HCT116 (cell line): ENCODE measurements at regions of chr20 and their contacts with region 1.

Region 1: GRCh38 chr20:1503564-1504227 is 12.5 kb upstream of the SIRPB2 start:
- DNase-seq: peak; percentile 91
- ATAC-seq: peak; percentile 97
- H3K4me3 ChIP-seq: no peak overlapping the region
- H3K27ac ChIP-seq: no peak overlapping the region
- H3K4me1 ChIP-seq: peaks cover 4 to 18% of the 10 kb centered on the region in 2 experiments
- H3K27me3 ChIP-seq: no peaks in the 10 kb centered on the region
- CTCF ChIP-seq: peak; percentile 99 to 100 (median 100)
- POLR2A ChIP-seq: no peak
- RAD21 ChIP-seq: peak; percentile 100

Region 2: GRCh38 chr20:1474825-1475603 is 28.7 kb before region 1 on chr20:
- CTCF ChIA-PET with region 1: interaction called, 36 read pairs
- POLR2A ChIA-PET with region 1: no interaction called
- RAD21 ChIA-PET with region 1: no interaction called
- intact Hi-C with region 1: loop called (anchors 1 kb)
- DNase-seq: no peak
- ATAC-seq: peak; percentile 67
- H3K4me3 ChIP-seq: no peak overlapping the region
- H3K27ac ChIP-seq: no peak overlapping the region
- H3K4me1 ChIP-seq: peaks cover 5 to 39% of the 10 kb centered on the region in 2 experiments; a peak in 3 of 4 replicates
- H3K27me3 ChIP-seq: no peaks in the 10 kb centered on the region
- CTCF ChIP-seq: peak; percentile 57 to 95 (median 60)
- POLR2A ChIP-seq: no peak
- RAD21 ChIP-seq: peak; percentile 83

Region 3: DNA sequence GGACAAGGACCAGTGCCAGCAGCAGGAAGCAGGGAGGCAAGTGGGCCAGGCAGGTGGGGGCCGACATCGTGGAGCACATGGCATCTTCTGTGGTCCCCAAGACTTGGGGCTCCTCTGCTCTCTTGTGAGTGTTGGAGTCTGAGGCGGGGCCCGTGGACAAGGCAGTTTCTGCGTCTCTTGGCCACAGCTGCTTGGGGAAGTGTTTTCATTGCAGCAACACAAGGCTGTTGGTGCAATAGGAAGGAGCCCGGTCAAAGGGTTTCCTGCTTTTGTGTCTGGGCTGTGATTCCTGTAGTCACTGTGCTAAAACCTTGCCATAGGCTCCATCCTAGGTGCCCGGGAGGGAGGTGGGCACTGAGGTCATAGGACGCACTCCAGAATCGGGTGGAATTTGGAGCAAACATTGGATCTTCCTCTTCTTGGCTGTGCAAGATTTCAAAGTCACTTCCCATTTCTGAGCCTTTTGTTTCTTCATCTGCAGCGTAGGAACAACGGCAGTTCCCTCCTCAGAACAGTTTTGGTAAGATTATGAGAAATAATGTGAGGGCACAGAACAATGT is 12.3 kb before region 1 on chr20 and contains the start of gene SIRPB2:
- CTCF ChIA-PET with region 1: interaction called, 17 read pairs
- POLR2A ChIA-PET with region 1: no interaction called
- RAD21 ChIA-PET with region 1: no interaction called
- intact Hi-C with region 1: no loop called
- DNase-seq: no peak
- ATAC-seq: no peak
- H3K4me3 ChIP-seq: no peak within 1 kb of the TSS
- H3K27ac ChIP-seq: no peak within 1 kb of the TSS
- H3K4me1 ChIP-seq: peaks cover 0 to 18% of the 10 kb centered on the region in 2 experiments; a peak in 2 of 4 replicates
- H3K27me3 ChIP-seq: no peaks in the 10 kb centered on the region
- CTCF ChIP-seq: no peak
- POLR2A ChIP-seq: no peak
- RAD21 ChIP-seq: no peak
- total RNA-seq, gene SIRPB2: not detected

Region 4: DNA sequence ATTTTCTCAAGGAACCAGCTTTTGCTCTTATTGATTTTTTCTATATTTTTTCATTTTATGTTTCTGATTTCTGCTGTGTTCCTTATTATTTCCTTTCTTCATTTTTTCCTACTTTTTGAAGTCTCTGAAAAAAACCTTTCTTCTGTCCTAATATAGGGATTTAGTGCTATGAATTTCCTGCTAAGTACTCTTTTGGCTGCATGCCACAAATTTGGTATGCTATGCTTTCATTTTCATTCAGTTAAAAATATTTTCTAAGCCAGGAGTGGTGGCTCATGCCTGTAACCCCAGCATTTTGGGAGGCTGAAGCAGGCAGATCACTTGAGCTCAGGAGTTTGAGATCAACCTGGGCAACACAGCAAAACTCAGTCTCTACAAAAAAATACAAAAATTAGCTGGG is 23.2 kb after region 1 on chr20:
- CTCF ChIA-PET with region 1: interaction called, 13 read pairs
- POLR2A ChIA-PET with region 1: no interaction called
- RAD21 ChIA-PET with region 1: no interaction called
- intact Hi-C with region 1: no loop called
- DNase-seq: no peak
- ATAC-seq: no peak
- H3K4me3 ChIP-seq: no peak overlapping the region
- H3K27ac ChIP-seq: no peak overlapping the region
- H3K4me1 ChIP-seq: no peaks in the 10 kb centered on the region
- H3K27me3 ChIP-seq: peaks cover 3% of the 10 kb centered on the region; the same call in 1 of the 2 replicates
- CTCF ChIP-seq: no peak
- POLR2A ChIP-seq: no peak
- RAD21 ChIP-seq: no peak